Common myeloid progenitor, CD34-positive (primary cell): ENCODE measurements at regions of chr4 and their contacts with region 1.

Region 1: GRCh38 chr4:1346781-1347409 is at the start of gene UVSSA:
- DNase-seq: peak; percentile 99 to 100 (median 100)
- H3K4me3 ChIP-seq: peak within 1 kb of the TSS; percentile 81 to 94 (median 89)
- H3K27ac ChIP-seq: peak within 1 kb of the TSS; percentile 75 to 88
- H3K4me1 ChIP-seq: peaks cover 6 to 30% (median 27%) of the 10 kb centered on the region in 4 experiments
- H3K27me3 ChIP-seq: no peaks in the 10 kb centered on the region

Region 2: DNA sequence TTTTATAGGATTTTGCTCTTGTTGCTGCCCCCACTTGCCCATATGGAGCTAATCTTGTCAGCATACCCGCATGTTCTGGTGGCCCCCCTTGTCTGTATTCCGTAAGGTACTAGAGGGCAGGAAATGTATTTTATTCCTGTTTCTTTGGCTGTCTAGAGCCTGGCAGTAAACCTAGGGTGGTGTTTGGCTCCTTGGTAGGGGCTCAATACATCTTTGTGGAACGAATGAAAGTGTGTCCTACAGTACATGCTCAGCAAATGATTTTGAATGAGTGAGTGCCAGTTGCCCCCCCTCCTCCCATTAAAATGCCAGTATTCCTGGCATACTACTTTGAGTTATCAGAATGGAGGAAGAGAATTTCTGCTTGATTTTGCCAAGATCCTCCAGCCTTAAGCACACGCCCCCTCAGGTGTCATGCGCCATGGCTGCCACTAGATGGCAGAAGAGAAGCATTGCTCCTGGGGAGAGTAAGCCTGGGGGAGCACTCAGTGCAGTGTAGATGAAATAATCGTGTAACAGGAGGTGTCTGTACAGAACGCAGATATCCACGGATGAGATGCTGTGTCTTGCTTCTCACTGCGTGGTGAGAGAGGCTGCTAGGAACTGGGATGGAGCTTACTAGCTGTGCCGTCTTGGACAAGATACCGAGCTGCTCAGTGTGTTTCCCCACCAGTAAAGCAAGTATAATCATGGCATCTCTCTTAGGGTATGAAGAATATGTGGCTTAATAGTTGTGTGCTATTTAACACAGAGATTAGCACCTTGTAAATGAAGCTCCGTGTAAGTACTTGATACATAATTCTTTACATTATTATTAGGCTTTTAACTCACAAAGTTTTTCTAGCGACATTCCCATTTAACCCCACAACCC is 216.3 kb before region 1 on chr4:
- CTCF ChIA-PET with region 1: interaction called, 32 read pairs
- POLR2A ChIA-PET with region 1: no interaction called
- DNase-seq: peak; percentile 71 to 88 (median 81)
- H3K4me3 ChIP-seq: no peak overlapping the region
- H3K27ac ChIP-seq: no peak overlapping the region
- H3K4me1 ChIP-seq: peaks cover 0 to 4% (median 0%) of the 10 kb centered on the region in 4 experiments
- H3K27me3 ChIP-seq: peaks cover 0 to 5% (median 0%) of the 10 kb centered on the region in 5 experiments

Region 3: GRCh38 chr4:1249148-1249730 is 97.7 kb before region 1 on chr4:
- CTCF ChIA-PET with region 1: interaction called, 7 read pairs
- POLR2A ChIA-PET with region 1: interaction called, 26 read pairs
- DNase-seq: peak; percentile 89 to 95 (median 94)
- H3K4me3 ChIP-seq: peak overlapping the region; percentile 61 to 88 (median 68)
- H3K27ac ChIP-seq: peak overlapping the region; percentile 62 to 84
- H3K4me1 ChIP-seq: peaks cover 2 to 47% (median 42%) of the 10 kb centered on the region in 4 experiments
- H3K27me3 ChIP-seq: no peaks in the 10 kb centered on the region